ENCODE measurements at regions of chr2 and their contacts with region 1.

Region 1: GRCh38 chr2:109613922-109614714 is at the starts of genes SEPTIN10 and SOWAHC:
- DNase-seq: peak; percentile 99
- H3K4me3 Mint-ChIP-seq: peak within 1 kb of the TSS; percentile 96
- H3K27ac Mint-ChIP-seq: peak within 1 kb of the TSS; percentile 96
- H3K4me1 Mint-ChIP-seq: peaks cover 16% of the 10 kb centered on the region
- H3K27me3 Mint-ChIP-seq: no peaks in the 10 kb centered on the region
- CTCF ChIP-seq: no peak
- total RNA-seq, gene SEPTIN10: 78.9 and 105 TPM in 2 replicates
- total RNA-seq, gene SOWAHC: 25.6 and 35.3 TPM in 2 replicates

Region 2: DNA sequence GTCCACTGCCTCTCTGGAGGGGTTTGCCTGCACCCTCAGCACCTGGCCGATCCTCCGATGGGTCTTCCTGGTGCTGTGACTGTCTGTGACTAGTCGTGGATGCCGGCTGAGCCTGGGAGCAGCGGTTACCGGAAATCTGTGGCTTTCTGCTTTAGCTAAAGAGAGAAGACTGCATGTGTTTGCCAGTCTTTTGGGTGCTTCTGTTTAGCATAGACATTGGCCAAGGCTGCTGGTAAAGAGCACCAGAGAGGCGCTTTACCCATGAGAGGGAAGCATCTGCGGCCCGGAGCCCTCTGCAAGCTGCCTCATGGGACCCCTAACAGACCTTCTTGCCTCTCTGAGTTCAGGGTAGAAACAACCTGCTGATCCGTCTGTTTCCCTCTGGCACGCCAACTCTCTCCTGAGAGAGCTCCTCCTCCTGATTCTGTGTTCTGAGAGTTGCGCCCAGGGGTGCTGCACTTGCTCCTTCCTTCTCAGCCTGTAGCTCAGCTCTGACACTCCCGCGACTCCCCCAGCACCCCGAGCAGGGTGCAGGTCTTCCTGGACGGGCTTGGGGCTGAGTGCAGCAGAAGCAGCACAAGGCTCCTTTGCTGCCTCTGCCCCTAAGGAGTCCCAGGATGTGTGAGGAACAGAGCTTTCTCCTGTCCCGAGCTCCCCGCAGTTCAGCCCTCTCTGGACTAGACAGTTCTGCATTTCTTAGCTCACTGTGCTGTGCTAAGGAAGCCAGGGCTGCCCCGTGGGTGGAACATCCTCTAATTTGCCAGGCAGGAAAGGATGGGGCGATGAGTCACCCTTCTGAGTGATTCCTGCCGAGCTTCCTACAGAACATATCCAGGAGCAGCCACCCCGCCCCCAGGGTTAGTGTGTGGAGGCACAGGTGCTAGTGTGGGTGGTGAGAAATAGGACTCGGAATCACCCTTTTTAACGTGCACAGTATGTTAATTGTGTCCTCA is 281.9 kb before region 1 on chr2:
- CTCF ChIA-PET with region 1: no interaction called
- POLR2A ChIA-PET with region 1: no interaction called
- intact Hi-C with region 1: no loop called
- DNase-seq: peak; percentile 98
- H3K4me3 Mint-ChIP-seq: peak overlapping the region; percentile 71
- H3K27ac Mint-ChIP-seq: peak overlapping the region; percentile 88
- H3K4me1 Mint-ChIP-seq: peaks cover 54% of the 10 kb centered on the region
- H3K27me3 Mint-ChIP-seq: no peaks in the 10 kb centered on the region
- CTCF ChIP-seq: no peak

Region 3: GRCh38 chr2:109624339-109624738 is 10.2 kb after region 1 on chr2:
- CTCF ChIA-PET with region 1: no interaction called
- POLR2A ChIA-PET with region 1: interaction called, 24 read pairs
- intact Hi-C with region 1: no loop called
- DNase-seq: no peak
- H3K4me3 Mint-ChIP-seq: no peak overlapping the region
- H3K27ac Mint-ChIP-seq: no peak overlapping the region
- H3K4me1 Mint-ChIP-seq: no peaks in the 10 kb centered on the region
- H3K27me3 Mint-ChIP-seq: no peaks in the 10 kb centered on the region
- CTCF ChIP-seq: no peak

Region 4: GRCh38 chr2:109630441-109631430 is 16.6 kb after region 1 on chr2:
- CTCF ChIA-PET with region 1: interaction called, 3 read pairs
- POLR2A ChIA-PET with region 1: interaction called, 24 read pairs
- intact Hi-C with region 1: no loop called
- DNase-seq: no peak
- H3K4me3 Mint-ChIP-seq: no peak overlapping the region
- H3K27ac Mint-ChIP-seq: no peak overlapping the region
- H3K4me1 Mint-ChIP-seq: no peaks in the 10 kb centered on the region
- H3K27me3 Mint-ChIP-seq: no peaks in the 10 kb centered on the region
- CTCF ChIP-seq: no peak

Region 5: GRCh38 chr2:109663721-109664120 is 49.6 kb after region 1 on chr2:
- CTCF ChIA-PET with region 1: interaction called, 8 read pairs
- POLR2A ChIA-PET with region 1: interaction called, 44 read pairs
- intact Hi-C with region 1: loop called (anchors 5 kb)
- DNase-seq: peak; percentile 98
- H3K4me3 Mint-ChIP-seq: no peak overlapping the region
- H3K27ac Mint-ChIP-seq: peak overlapping the region; percentile 24
- H3K4me1 Mint-ChIP-seq: peaks cover 17% of the 10 kb centered on the region
- H3K27me3 Mint-ChIP-seq: no peaks in the 10 kb centered on the region
- CTCF ChIP-seq: no peak

Region 6: DNA sequence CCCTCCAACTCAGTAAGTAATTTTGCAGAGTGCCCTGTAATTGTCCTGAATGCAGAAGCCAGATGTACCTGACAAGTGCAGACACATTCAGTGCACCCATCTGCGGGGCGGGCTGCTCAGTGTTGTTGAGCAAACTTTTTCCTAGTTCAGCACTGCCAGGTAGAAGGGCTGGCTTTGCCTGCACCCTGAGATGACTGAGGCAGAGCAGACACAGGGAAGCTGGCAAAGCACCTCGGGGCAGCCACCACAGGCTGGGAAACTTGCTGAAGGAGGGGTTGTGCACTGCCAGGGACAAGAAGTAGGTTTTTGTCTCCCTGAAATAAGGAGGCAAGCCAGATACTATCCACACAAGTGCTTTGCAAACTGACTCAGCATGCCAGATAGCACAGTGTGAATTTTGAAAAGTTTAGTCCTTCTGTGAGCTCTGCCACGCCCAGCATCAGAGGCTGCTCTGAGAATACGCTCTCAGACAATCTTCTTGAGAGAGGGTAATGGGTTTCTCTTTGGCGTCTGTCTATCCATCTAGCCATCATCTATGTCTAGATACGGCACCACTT is 62.3 kb after region 1 on chr2:
- CTCF ChIA-PET with region 1: no interaction called
- POLR2A ChIA-PET with region 1: no interaction called
- intact Hi-C with region 1: no loop called
- DNase-seq: no peak
- H3K4me3 Mint-ChIP-seq: no peak overlapping the region
- H3K27ac Mint-ChIP-seq: no peak overlapping the region
- H3K4me1 Mint-ChIP-seq: peaks cover 8% of the 10 kb centered on the region
- H3K27me3 Mint-ChIP-seq: no peaks in the 10 kb centered on the region
- CTCF ChIP-seq: no peak

Region 7: DNA sequence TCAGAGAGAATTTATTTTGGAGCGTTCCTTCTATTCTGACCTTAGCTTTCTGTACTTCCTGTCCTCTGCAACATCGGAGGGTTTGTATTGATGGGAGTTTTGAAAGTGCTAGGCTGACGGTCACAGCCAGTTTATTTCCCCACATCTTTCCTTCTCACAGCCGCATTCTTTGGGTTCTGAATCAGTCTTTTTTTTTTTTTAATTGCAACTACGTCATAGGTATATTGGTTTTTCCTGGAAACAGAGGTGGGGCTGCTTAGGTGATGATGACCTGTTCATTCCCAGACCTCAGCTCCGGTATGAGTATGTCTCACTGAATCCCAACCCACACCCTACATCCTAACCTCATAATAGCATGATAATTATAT is 88.5 kb after region 1 on chr2:
- CTCF ChIA-PET with region 1: interaction called, 9 read pairs
- POLR2A ChIA-PET with region 1: interaction called, 168 read pairs
- intact Hi-C with region 1: loop called (anchors 1 kb)
- DNase-seq: peak; percentile 89
- H3K4me3 Mint-ChIP-seq: peak overlapping the region; percentile 68
- H3K27ac Mint-ChIP-seq: peak overlapping the region; percentile 97
- H3K4me1 Mint-ChIP-seq: peaks cover 40% of the 10 kb centered on the region
- H3K27me3 Mint-ChIP-seq: no peaks in the 10 kb centered on the region
- CTCF ChIP-seq: no peak

Region 8: GRCh38 chr2:109715313-109715805 is 101.2 kb after region 1 on chr2:
- CTCF ChIA-PET with region 1: interaction called, 5 read pairs
- POLR2A ChIA-PET with region 1: interaction called, 13 read pairs
- intact Hi-C with region 1: loop called (anchors 1 kb)
- DNase-seq: peak; percentile 68
- H3K4me3 Mint-ChIP-seq: no peak overlapping the region
- H3K27ac Mint-ChIP-seq: no peak overlapping the region
- H3K4me1 Mint-ChIP-seq: no peaks in the 10 kb centered on the region
- H3K27me3 Mint-ChIP-seq: no peaks in the 10 kb centered on the region
- CTCF ChIP-seq: peak; percentile 78

Measured in MCF 10A (cell line).